Calu3 (cell line): ENCODE measurements at regions of chr3 and their contacts with region 1.

Region 1: GRCh38 chr3:77513542-77513941 is 473.6 kb downstream of the ROBO2 start:
- DNase-seq: no peak
- H3K4me3 Mint-ChIP-seq: no peak overlapping the region
- H3K27ac Mint-ChIP-seq: no peak overlapping the region
- H3K4me1 Mint-ChIP-seq: no peaks in the 10 kb centered on the region
- H3K27me3 Mint-ChIP-seq: no peaks in the 10 kb centered on the region
- CTCF ChIP-seq: no peak

Region 2: GRCh38 chr3:77319711-77320110 is 193.8 kb before region 1 on chr3:
- CTCF ChIA-PET with region 1: no interaction called
- intact Hi-C with region 1: no loop called
- DNase-seq: no peak
- H3K4me3 Mint-ChIP-seq: no peak overlapping the region
- H3K27ac Mint-ChIP-seq: no peak overlapping the region
- H3K4me1 Mint-ChIP-seq: peaks cover 29% of the 10 kb centered on the region
- H3K27me3 Mint-ChIP-seq: no peaks in the 10 kb centered on the region
- CTCF ChIP-seq: no peak

Region 3: DNA sequence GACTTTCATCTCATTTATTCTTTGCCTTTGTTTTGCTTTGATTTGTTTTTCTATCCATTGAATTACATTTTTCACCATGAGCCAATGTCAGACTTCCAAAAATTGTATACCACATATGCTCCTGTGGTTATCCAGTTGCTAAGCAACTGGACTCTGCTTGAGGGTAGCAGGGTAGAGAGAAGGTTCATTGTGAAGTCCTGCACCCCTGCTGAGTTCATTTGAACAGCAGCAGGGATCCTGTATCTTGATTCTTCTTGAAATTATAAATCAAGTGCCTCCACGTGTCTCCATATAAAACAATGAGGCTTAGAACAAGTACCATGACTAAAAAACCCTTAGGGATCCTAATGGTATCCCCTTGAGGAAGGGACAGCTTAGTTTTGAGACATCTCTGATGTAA is 24.3 kb before region 1 on chr3:
- CTCF ChIA-PET with region 1: no interaction called
- intact Hi-C with region 1: no loop called
- DNase-seq: no peak
- H3K4me3 Mint-ChIP-seq: no peak overlapping the region
- H3K27ac Mint-ChIP-seq: no peak overlapping the region
- H3K4me1 Mint-ChIP-seq: no peaks in the 10 kb centered on the region
- H3K27me3 Mint-ChIP-seq: no peaks in the 10 kb centered on the region
- CTCF ChIP-seq: no peak

Region 4: GRCh38 chr3:77524946-77525682 is 11.6 kb after region 1 on chr3:
- CTCF ChIA-PET with region 1: interaction called, 12 read pairs
- intact Hi-C with region 1: no loop called
- DNase-seq: no peak
- H3K4me3 Mint-ChIP-seq: no peak overlapping the region
- H3K27ac Mint-ChIP-seq: no peak overlapping the region
- H3K4me1 Mint-ChIP-seq: no peaks in the 10 kb centered on the region
- H3K27me3 Mint-ChIP-seq: no peaks in the 10 kb centered on the region
- CTCF ChIP-seq: no peak